ENCODE measurements at regions of chr11 and their contacts with region 1.

Region 1: GRCh38 chr11:69296890-69297786 is 3.2 kb downstream of the MYEOV start:
- DNase-seq: peak; percentile 97
- H3K4me3 Mint-ChIP-seq: peak overlapping the region; percentile 32
- H3K27ac Mint-ChIP-seq: peak overlapping the region; percentile 81
- H3K4me1 Mint-ChIP-seq: peaks cover 60% of the 10 kb centered on the region
- H3K27me3 Mint-ChIP-seq: no peaks in the 10 kb centered on the region
- CTCF ChIP-seq: no peak

Region 2: DNA sequence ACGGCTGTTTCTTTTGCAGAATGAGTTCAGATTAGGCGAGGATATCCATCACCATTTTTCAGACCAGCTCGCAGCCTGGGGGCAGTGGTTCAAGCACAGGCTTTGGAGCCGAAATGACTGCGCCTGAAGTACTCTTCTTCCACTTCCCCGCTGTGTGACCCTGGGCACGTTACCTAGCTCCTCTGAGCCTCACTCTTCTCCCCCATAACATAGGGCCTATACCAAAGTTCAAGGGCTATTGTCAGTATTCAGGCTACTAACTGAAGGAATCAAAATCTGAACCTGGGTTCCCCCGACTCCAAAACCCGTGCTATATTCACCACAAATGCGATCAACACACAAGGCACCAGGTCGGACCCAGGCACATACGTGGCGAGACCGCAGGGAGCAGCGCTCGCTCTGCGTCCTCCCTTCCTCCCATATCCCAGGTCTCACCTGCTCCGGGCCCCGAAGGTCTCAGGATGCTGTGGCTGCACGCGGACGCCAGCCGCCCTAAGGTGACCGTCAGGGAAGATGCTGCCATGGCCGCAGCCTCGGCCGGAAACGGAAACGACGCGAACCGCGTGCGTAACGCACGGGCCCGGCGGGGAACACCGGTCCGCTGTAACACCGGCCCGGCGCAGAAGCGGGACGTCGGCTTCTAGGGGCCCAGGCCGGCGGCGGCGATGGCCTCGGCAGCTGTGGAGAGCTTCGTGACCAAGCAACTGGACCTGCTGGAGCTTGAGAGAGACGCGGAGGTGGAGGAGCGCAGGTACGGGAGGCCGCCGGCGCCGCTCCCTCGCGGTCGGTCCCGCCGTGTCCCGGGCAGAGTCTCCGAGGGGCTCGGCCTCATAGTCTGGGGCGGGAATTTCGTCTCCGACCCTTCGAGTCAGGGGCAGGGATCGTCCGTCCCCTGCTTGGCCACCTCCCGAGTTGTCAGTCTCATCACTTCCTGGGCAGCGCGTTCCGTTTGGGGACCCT is 393.6 kb before region 1 on chr11 and contains the starts of genes IGHMBP2 and MRPL21:
- CTCF ChIA-PET with region 1: no interaction called
- POLR2A ChIA-PET with region 1: no interaction called
- intact Hi-C with region 1: no loop called
- DNase-seq: peak; percentile 79
- H3K4me3 Mint-ChIP-seq: peak within 1 kb of the TSS; percentile 96
- H3K27ac Mint-ChIP-seq: peak within 1 kb of the TSS; percentile 83
- H3K4me1 Mint-ChIP-seq: peaks cover 31% of the 10 kb centered on the region
- H3K27me3 Mint-ChIP-seq: no peaks in the 10 kb centered on the region
- CTCF ChIP-seq: no peak
- total RNA-seq, gene IGHMBP2: 19.8 and 29.4 TPM in 2 replicates
- total RNA-seq, gene MRPL21: 80.2 and 96.5 TPM in 2 replicates

Region 3: GRCh38 chr11:69122642-69123431 is 174.3 kb before region 1 on chr11:
- CTCF ChIA-PET with region 1: no interaction called
- POLR2A ChIA-PET with region 1: interaction called, 8 read pairs
- intact Hi-C with region 1: loop called (anchors 5 kb)
- DNase-seq: peak; percentile 92
- H3K4me3 Mint-ChIP-seq: peak overlapping the region; percentile 47
- H3K27ac Mint-ChIP-seq: peak overlapping the region; percentile 71
- H3K4me1 Mint-ChIP-seq: peaks cover 31% of the 10 kb centered on the region
- H3K27me3 Mint-ChIP-seq: no peaks in the 10 kb centered on the region
- CTCF ChIP-seq: no peak

Region 4: GRCh38 chr11:69186312-69187260 is 110.6 kb before region 1 on chr11:
- CTCF ChIA-PET with region 1: no interaction called
- POLR2A ChIA-PET with region 1: no interaction called
- intact Hi-C with region 1: no loop called
- DNase-seq: no peak
- H3K4me3 Mint-ChIP-seq: no peak overlapping the region
- H3K27ac Mint-ChIP-seq: no peak overlapping the region
- H3K4me1 Mint-ChIP-seq: no peaks in the 10 kb centered on the region
- H3K27me3 Mint-ChIP-seq: no peaks in the 10 kb centered on the region
- CTCF ChIP-seq: no peak

Region 5: GRCh38 chr11:69274531-69275255 is 22.4 kb before region 1 on chr11:
- CTCF ChIA-PET with region 1: no interaction called
- POLR2A ChIA-PET with region 1: interaction called, 11 read pairs
- intact Hi-C with region 1: no loop called
- DNase-seq: peak; percentile 90
- H3K4me3 Mint-ChIP-seq: no peak overlapping the region
- H3K27ac Mint-ChIP-seq: no peak overlapping the region
- H3K4me1 Mint-ChIP-seq: peaks cover 18% of the 10 kb centered on the region
- H3K27me3 Mint-ChIP-seq: no peaks in the 10 kb centered on the region
- CTCF ChIP-seq: no peak

Region 6: GRCh38 chr11:69327741-69328191 is 30.6 kb after region 1 on chr11:
- CTCF ChIA-PET with region 1: no interaction called
- POLR2A ChIA-PET with region 1: no interaction called
- intact Hi-C with region 1: no loop called
- DNase-seq: no peak
- H3K4me3 Mint-ChIP-seq: no peak overlapping the region
- H3K27ac Mint-ChIP-seq: no peak overlapping the region
- H3K4me1 Mint-ChIP-seq: no peaks in the 10 kb centered on the region
- H3K27me3 Mint-ChIP-seq: no peaks in the 10 kb centered on the region
- CTCF ChIP-seq: no peak

Region 7: GRCh38 chr11:69352715-69353325 is 55.7 kb after region 1 on chr11:
- CTCF ChIA-PET with region 1: no interaction called
- POLR2A ChIA-PET with region 1: interaction called, 3 read pairs
- intact Hi-C with region 1: loop called (anchors 5 kb)
- DNase-seq: peak; percentile 71
- H3K4me3 Mint-ChIP-seq: no peak overlapping the region
- H3K27ac Mint-ChIP-seq: no peak overlapping the region
- H3K4me1 Mint-ChIP-seq: peaks cover 21% of the 10 kb centered on the region
- H3K27me3 Mint-ChIP-seq: no peaks in the 10 kb centered on the region
- CTCF ChIP-seq: no peak

Region 8: DNA sequence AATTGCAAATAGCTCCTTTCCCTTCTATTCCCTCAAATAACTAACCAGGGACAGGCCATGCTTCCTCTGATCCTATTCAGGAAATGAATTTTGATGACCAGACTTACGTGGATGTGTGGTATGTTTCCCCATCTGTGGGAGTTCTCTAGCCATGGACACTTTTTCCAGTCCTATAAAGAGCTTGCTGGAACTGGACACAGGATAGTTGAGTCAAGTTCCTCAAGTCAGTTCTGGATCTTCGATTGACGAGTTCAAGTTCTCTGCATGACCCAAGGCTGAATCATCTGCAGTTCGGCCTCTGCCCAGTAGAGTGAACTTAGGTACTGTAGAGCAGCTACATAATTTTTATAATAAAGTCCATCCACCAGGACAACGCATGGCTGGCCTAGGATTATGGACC is 291.1 kb after region 1 on chr11:
- CTCF ChIA-PET with region 1: no interaction called
- POLR2A ChIA-PET with region 1: no interaction called
- intact Hi-C with region 1: loop called (anchors 5 kb)
- DNase-seq: peak; percentile 61
- H3K4me3 Mint-ChIP-seq: no peak overlapping the region
- H3K27ac Mint-ChIP-seq: peak overlapping the region; percentile 78
- H3K4me1 Mint-ChIP-seq: peaks cover 18% of the 10 kb centered on the region
- H3K27me3 Mint-ChIP-seq: no peaks in the 10 kb centered on the region
- CTCF ChIP-seq: peak; percentile 39